Heart left ventricle (tissue), 16 donors: ENCODE measurements at regions of chr9 and their contacts with region 1.

Region 1: GRCh38 chr9:126722252-126723078 is 82.4 kb upstream of the ZBTB43 start:
- DNase-seq: peak; percentile 76 to 92 (median 83)
- ATAC-seq: peak; percentile 34 to 93 (median 88)
- H3K4me3 ChIP-seq: peak overlapping the region; percentile 8 to 86 (median 64)
- H3K27ac ChIP-seq: peak overlapping the region in 9 of 12 donors; percentile 19 to 84 (median 56)
- H3K4me1 ChIP-seq: peaks cover 0 to 50% (median 10%) of the 10 kb centered on the region in 12 donors
- H3K27me3 ChIP-seq: peaks cover 0 to 34% (median 12%) of the 10 kb centered on the region in 9 donors
- CTCF ChIP-seq: no peak
- POLR2A ChIP-seq: no peak

Region 2: DNA sequence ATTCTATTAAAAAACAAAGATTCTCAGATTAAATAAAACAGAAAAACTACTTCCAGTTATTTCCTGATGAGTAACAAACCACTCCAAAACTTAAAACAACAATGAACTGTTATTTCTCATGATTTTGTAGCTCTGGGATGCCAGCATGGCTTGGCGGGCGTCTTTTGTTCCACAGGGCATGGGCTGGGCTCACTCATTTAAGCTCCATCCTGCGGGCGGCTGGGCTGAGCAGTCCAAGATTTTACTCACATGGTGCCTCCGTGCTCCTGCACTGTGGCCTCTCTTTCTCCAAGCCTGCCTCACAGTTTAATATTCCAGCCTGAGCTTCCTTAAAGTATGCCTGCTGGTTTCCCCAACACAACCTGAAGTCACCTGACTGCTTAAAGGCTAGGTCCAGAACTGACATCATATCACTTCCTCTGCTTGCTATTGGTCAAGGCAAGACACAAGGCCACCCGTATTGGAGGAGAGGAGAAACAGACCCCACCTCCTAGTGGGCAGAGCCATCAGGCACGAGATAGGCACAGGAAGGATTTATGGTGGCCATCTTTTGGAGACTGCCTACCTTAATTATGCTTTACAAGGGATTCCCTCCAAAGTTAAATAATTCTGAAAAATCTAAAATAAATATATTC is 40.8 kb after region 1 on chr9:
- intact Hi-C with region 1: loop called in 1 of 10 experiments (anchors 5 kb)
- DNase-seq: no peak
- ATAC-seq: no peak
- H3K4me3 ChIP-seq: no peak overlapping the region
- H3K27ac ChIP-seq: no peak overlapping the region
- H3K4me1 ChIP-seq: no peaks in the 10 kb centered on the region
- H3K27me3 ChIP-seq: peaks cover 0 to 19% (median 0%) of the 10 kb centered on the region in 9 donors
- CTCF ChIP-seq: no peak
- POLR2A ChIP-seq: no peak

Region 3: DNA sequence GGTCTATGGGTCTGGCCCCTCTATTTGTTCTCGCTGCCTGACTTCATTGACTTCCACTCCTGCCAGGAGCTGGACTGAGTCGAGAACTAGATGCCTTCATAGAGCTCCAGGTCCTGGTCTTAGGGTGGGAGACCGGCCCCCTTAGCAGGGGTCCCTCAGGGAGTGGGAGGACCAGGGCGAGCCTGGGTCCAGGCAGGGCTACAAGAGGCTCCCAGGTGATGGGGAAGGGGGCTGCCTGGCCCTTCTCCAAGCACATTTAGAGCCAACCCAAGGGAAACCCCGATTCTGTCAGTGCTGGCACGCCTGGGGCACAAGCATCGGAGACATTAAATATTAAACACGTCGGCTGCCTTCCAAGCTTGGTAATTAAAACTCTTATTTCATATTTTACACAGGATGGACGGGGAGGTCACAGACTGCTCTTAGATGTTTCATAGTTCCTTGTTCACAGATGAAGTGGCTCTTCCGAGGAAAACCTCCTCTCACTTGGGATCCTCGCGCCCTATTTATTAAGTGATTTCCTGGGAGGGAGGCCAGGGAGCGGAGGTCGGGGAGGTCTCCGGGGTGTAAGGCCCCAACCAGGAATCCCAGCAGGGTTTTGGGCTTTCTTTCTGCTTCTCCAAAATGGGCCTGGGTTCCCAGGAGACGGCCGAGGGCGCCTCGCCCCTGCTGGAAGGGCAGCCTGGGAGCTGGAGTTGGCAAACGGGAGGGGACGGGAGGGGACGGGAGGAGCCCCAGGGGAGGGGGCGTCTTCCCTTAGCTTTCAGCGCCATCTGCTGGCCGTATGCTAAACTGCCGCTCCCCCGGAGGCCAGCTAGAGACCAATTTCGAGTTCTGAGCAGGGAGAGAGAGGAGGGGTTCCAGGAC is 59.0 kb after region 1 on chr9:
- intact Hi-C with region 1: loop called in 1 of 10 experiments (anchors 5 kb)
- DNase-seq: peak; percentile 77 to 89 (median 79)
- ATAC-seq: peak; percentile 79 to 86 (median 81)
- H3K4me3 ChIP-seq: peak overlapping the region in 3 of 12 donors; percentile 4 to 26 (median 9)
- H3K27ac ChIP-seq: no peak overlapping the region
- H3K4me1 ChIP-seq: peaks cover 0 to 17% (median 5%) of the 10 kb centered on the region in 12 donors
- H3K27me3 ChIP-seq: peaks cover 0 to 34% (median 3%) of the 10 kb centered on the region in 9 donors
- CTCF ChIP-seq: peak; percentile 89 to 98 (median 95)
- POLR2A ChIP-seq: no peak